ENCODE measurements at regions of chr7 and their contacts with region 1.

Region 1: GRCh38 chr7:40027545-40027944 is 77.5 kb downstream of the CDK13 start:
- DNase-seq: no peak
- ATAC-seq: no peak
- H3K4me3 ChIP-seq: no peak overlapping the region
- H3K4me3 Mint-ChIP-seq: no peak overlapping the region
- H3K27ac ChIP-seq: no peak overlapping the region
- H3K27ac Mint-ChIP-seq: no peak overlapping the region
- H3K4me1 ChIP-seq: no peaks in the 10 kb centered on the region
- H3K4me1 Mint-ChIP-seq: peaks cover 18 to 31% (median 29%) of the 10 kb centered on the region in 3 donors
- H3K27me3 ChIP-seq: no peaks in the 10 kb centered on the region
- H3K27me3 Mint-ChIP-seq: no peaks in the 10 kb centered on the region

Region 2: GRCh38 chr7:40138973-40139372 is 111.4 kb after region 1 on chr7:
- CTCF ChIA-PET with region 1: no interaction called
- POLR2A ChIA-PET with region 1: interaction called in 1 of 2 experiments, 10 read pairs
- DNase-seq: no peak
- ATAC-seq: no peak
- H3K4me3 ChIP-seq: no peak overlapping the region
- H3K4me3 Mint-ChIP-seq: no peak overlapping the region
- H3K27ac ChIP-seq: no peak overlapping the region
- H3K27ac Mint-ChIP-seq: no peak overlapping the region
- H3K4me1 ChIP-seq: peaks cover 3 to 7% of the 10 kb centered on the region in 2 experiments
- H3K4me1 Mint-ChIP-seq: peaks cover 6 to 7% (median 7%) of the 10 kb centered on the region in 3 donors
- H3K27me3 ChIP-seq: peaks cover 0 to 14% of the 10 kb centered on the region in 2 experiments
- H3K27me3 Mint-ChIP-seq: peaks cover 9 to 12% of the 10 kb centered on the region in 2 donors